ENCODE measurements at regions of chr7 and their contacts with region 1.

Region 1: DNA sequence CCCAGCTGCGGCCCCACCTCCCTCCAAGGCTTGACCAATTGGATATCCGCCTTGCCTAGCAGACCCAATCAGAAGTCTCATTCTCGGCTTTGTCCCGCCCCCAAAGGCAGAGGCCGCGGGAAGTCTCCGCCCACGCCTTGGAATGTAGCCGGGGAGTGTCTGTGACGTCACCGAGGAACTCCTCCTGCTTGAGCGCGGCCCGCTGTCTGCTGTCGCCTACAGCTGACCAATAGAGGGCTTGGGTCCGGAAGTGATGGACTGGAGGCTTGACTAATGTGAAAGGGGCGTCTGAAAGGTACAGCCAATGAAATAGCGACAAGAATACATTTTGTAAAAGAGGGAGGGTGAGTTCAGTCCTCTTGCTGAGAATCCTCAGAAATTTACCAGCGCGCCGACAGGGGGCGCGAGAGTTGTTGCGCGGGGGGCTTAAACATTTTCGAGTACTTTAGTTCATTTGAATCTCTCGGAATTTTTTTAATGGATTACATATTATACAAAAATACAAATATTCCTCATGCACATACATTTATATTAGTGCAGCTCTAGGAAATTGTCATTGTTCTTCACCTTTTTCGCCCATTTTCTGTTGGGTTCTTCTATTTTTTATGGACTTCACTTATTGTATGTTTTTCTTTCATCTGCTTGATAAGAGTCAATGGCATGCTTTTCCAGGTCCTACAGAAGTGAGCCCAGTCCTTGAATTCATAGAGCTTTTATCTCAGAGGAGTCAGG is 376 bp upstream of the CREB3L2 start:
- DNase-seq: peak; percentile 99 to 100
- H3K4me3 ChIP-seq: peak overlapping the region; percentile 82
- H3K4me1 ChIP-seq: peaks cover 23% of the 10 kb centered on the region
- H3K27me3 ChIP-seq: no peaks in the 10 kb centered on the region

Region 2: DNA sequence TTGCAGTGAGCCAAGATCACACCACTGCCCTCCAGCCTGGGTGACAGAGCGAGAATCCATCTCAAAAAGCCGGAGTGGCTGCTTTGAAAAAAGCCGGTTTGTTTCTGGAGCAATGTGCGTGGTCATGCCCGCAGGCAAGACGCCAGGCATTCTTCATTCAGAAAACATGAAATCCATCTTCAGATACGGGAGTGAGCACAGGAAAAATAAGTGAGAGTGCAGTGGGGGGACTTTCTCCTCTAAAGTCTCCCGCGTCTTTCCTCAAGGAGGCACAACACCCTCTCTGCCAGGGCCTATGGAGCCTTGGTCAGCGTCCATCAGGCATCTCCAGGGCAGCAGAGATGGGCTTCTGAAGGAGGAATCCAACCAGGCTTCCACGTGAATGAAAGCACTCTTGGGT is 93.2 kb before region 1 on chr7:
- in situ Hi-C with region 1: loop called (anchors 5 kb)
- DNase-seq: no peak
- H3K4me3 ChIP-seq: no peak overlapping the region
- H3K4me1 ChIP-seq: peaks cover 4% of the 10 kb centered on the region; the same call in 1 of the 2 replicates
- H3K27me3 ChIP-seq: no peaks in the 10 kb centered on the region